ENCODE measurements at regions of chr12 and their contacts with region 1.

Region 1: DNA sequence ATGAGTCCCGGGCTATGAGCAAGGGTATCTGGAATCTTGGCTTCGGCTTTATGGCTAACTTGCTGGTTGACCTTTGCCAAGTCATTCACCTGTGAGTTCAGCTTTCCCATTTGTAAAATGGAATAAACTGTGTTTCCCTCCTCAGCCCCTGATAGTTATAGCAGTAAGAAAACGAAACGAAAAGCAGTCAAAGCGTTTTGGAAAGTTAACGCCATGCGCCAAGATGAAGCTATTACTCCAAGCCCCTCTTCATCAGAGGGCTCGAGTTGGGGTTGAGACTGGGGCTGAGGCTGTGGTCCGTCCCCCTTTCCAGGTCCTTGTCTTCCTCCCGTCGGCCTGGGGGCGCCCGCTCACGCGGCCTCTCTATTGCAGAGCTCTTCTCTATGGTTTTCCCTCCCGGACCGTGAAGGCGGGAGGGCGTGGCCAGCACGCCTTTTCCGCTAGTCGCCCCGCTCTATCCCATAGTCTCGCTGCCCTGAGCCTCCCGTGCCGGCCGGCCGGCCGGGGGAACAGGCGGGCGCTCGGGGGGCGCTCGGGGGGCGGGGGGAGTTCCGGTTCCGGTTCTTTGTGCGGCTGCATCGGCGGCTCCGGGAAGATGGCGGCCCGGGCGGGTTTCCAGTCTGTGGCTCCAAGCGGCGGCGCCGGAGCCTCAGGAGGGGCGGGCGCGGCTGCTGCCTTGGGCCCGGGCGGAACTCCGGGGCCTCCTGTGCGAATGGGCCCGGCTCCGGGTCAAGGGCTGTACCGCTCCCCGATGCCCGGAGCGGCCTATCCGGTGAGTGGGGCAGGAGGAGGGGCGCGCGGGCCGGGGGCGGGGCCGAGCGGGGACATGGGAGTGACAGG is at the start of gene SMARCD1:
- DNase-seq: peak; percentile 92
- ATAC-seq: peak; percentile 84
- H3K4me3 ChIP-seq: peak within 1 kb of the TSS; percentile 64 to 97 (median 81)
- H3K4me3 Mint-ChIP-seq: peak within 1 kb of the TSS; percentile 97
- H3K27ac ChIP-seq: peak within 1 kb of the TSS; percentile 87 to 92
- H3K27ac Mint-ChIP-seq: peak within 1 kb of the TSS; percentile 99
- H3K4me1 ChIP-seq: peaks cover 13 to 20% of the 10 kb centered on the region in 2 donors
- H3K4me1 Mint-ChIP-seq: peaks cover 41% of the 10 kb centered on the region
- H3K27me3 ChIP-seq: no peaks in the 10 kb centered on the region
- H3K27me3 Mint-ChIP-seq: no peaks in the 10 kb centered on the region
- CTCF ChIP-seq: no peak
- total RNA-seq, gene SMARCD1: 101 and 104 TPM in 2 replicates

Region 2: GRCh38 chr12:50101663-50102062 is 16.7 kb after region 1 on chr12:
- CTCF ChIA-PET with region 1: interaction called, 343 read pairs
- POLR2A ChIA-PET with region 1: interaction called, 3 read pairs
- intact Hi-C with region 1: no loop called
- DNase-seq: no peak
- ATAC-seq: no peak
- H3K4me3 ChIP-seq: no peak overlapping the region
- H3K4me3 Mint-ChIP-seq: no peak overlapping the region
- H3K27ac ChIP-seq: no peak overlapping the region
- H3K27ac Mint-ChIP-seq: no peak overlapping the region
- H3K4me1 ChIP-seq: no peaks in the 10 kb centered on the region
- H3K4me1 Mint-ChIP-seq: no peaks in the 10 kb centered on the region
- H3K27me3 ChIP-seq: no peaks in the 10 kb centered on the region
- H3K27me3 Mint-ChIP-seq: no peaks in the 10 kb centered on the region
- CTCF ChIP-seq: no peak

Region 3: GRCh38 chr12:50132505-50133135 is 47.6 kb after region 1 on chr12:
- CTCF ChIA-PET with region 1: interaction called, 19 read pairs
- POLR2A ChIA-PET with region 1: no interaction called
- intact Hi-C with region 1: loop called (anchors 2 kb)
- DNase-seq: peak; percentile 42
- ATAC-seq: no peak
- H3K4me3 ChIP-seq: no peak overlapping the region
- H3K4me3 Mint-ChIP-seq: no peak overlapping the region
- H3K27ac ChIP-seq: peak overlapping the region in 1 of 2 donors; percentile 35
- H3K27ac Mint-ChIP-seq: peak overlapping the region; percentile 8
- H3K4me1 ChIP-seq: peaks cover 6 to 7% of the 10 kb centered on the region in 2 donors
- H3K4me1 Mint-ChIP-seq: peaks cover 14% of the 10 kb centered on the region
- H3K27me3 ChIP-seq: no peaks in the 10 kb centered on the region
- H3K27me3 Mint-ChIP-seq: no peaks in the 10 kb centered on the region
- CTCF ChIP-seq: peak; percentile 48

Region 4: DNA sequence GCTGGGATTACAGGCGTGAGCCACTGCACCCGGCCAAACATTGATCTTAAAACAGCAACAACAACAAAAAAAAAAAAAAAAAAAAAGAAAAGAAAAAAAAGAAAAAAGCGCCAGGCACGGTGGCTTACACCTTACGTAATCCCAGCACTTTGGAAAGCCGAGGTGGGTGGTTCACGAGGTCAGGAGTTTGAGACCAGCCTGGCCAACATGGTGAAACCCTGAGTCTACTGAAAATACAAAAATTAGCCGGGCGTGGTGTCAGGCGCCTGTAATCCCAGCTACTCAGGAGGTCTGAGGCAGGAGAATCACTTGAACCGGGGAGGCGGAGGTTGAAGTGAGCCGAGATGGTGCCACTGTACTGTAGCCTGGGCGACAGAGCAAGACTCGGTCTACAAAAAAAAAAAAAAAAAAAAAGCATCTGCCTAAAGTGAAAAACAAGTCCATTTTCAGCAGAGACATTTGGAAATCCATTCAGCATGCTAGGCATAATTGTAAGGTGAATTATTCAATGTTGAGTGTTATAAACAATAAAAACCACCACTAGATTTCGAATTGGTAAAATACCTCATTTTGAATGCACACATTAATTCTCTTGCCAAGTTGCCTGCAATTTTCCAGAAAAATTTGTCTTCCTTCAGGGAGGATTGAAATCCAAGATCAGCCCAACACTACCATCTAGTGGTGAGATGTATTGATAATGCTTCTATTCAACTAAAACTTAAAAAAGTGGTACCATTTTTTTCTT is 90.1 kb after region 1 on chr12:
- CTCF ChIA-PET with region 1: interaction called, 43 read pairs
- POLR2A ChIA-PET with region 1: interaction called, 4 read pairs
- intact Hi-C with region 1: loop called (anchors 1 kb)
- DNase-seq: peak; percentile 73
- ATAC-seq: no peak
- H3K4me3 ChIP-seq: no peak overlapping the region
- H3K4me3 Mint-ChIP-seq: no peak overlapping the region
- H3K27ac ChIP-seq: no peak overlapping the region
- H3K27ac Mint-ChIP-seq: no peak overlapping the region
- H3K4me1 ChIP-seq: no peaks in the 10 kb centered on the region
- H3K4me1 Mint-ChIP-seq: no peaks in the 10 kb centered on the region
- H3K27me3 ChIP-seq: no peaks in the 10 kb centered on the region
- H3K27me3 Mint-ChIP-seq: no peaks in the 10 kb centered on the region
- CTCF ChIP-seq: peak; percentile 93